ENCODE measurements at regions of chrX and their contacts with region 1.

Region 1: DNA sequence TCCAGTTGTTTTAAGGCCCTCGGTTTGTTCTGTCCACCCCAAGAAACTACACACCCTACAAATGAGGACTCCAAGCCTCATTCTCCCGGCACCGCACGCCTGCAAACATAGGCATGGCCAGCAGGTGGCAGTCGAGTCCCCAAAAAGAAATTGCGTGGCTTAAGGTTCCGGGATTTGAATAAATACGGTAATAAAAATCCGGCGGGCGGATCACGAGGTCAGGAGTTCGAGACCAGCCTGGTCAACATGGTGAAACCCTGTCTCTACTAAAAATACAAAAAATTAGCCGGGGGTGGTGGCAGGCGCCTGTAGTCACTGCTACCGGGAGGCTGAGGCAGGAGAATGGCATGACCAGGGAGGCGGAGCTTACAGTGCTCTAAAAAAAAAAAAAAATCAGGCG is 21.8 kb upstream of the CSF2RA start:
- DNase-seq: peak; percentile 59 to 70
- H3K4me3 ChIP-seq: no peak overlapping the region
- H3K4me3 Mint-ChIP-seq: no peak overlapping the region
- H3K27ac Mint-ChIP-seq: no peak overlapping the region
- H3K4me1 ChIP-seq: no peaks in the 10 kb centered on the region
- H3K4me1 Mint-ChIP-seq: peaks cover 6% of the 10 kb centered on the region
- H3K27me3 ChIP-seq: no peaks in the 10 kb centered on the region
- H3K27me3 Mint-ChIP-seq: no peaks in the 10 kb centered on the region
- CTCF ChIP-seq: peak; percentile 57 to 74

Region 2: DNA sequence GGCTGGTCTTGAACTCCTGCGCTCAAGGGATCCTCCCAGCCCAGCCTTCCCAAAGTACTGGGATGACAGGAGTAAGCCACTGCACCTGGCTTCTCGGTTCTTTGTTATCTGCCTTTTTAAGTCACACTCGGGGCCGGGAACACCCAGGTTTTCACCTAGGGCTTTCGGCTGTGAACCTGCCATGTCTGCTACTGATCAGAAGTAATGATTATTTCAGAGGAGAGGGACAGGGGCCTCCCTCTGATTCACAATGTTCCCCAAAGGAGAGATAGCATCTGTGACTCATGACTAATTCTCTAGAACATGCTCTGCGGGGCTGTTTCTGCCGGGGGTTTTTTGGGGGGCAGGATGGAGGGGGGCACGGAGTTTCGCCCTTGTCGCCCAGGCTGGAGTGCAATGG is 61.3 kb before region 1 on chrX:
- CTCF ChIA-PET with region 1: no interaction called
- POLR2A ChIA-PET with region 1: no interaction called
- intact Hi-C with region 1: no loop called
- DNase-seq: no peak
- H3K4me3 ChIP-seq: no peak overlapping the region
- H3K4me3 Mint-ChIP-seq: no peak overlapping the region
- H3K27ac Mint-ChIP-seq: no peak overlapping the region
- H3K4me1 ChIP-seq: no peaks in the 10 kb centered on the region
- H3K4me1 Mint-ChIP-seq: no peaks in the 10 kb centered on the region
- H3K27me3 ChIP-seq: no peaks in the 10 kb centered on the region
- H3K27me3 Mint-ChIP-seq: no peaks in the 10 kb centered on the region
- CTCF ChIP-seq: no peak

Region 3: DNA sequence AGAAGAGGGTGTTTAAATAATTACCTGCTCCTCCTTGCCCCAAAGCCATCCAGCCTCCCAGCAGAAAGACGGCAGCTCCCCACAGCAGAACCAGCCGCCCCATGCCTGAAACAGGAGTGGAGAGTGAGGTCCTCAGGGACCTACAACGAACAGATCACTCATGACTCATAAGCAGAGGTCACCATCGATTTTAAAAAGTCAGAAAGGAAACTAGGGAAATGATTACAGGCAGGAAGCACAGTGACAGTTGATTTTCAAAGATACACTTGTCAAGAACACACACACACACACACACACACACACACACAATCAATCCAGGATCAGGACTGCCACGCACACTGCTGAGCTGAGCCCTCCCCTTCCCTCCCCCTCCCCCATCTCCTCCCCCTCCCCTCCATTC is 34.3 kb before region 1 on chrX and contains the start of gene CRLF2:
- CTCF ChIA-PET with region 1: no interaction called
- POLR2A ChIA-PET with region 1: no interaction called
- intact Hi-C with region 1: no loop called
- DNase-seq: no peak
- H3K4me3 ChIP-seq: no peak within 1 kb of the TSS
- H3K4me3 Mint-ChIP-seq: no peak within 1 kb of the TSS
- H3K27ac Mint-ChIP-seq: no peak within 1 kb of the TSS
- H3K4me1 ChIP-seq: no peaks in the 10 kb centered on the region
- H3K4me1 Mint-ChIP-seq: no peaks in the 10 kb centered on the region
- H3K27me3 ChIP-seq: no peaks in the 10 kb centered on the region
- H3K27me3 Mint-ChIP-seq: no peaks in the 10 kb centered on the region
- CTCF ChIP-seq: no peak
- total RNA-seq, gene CRLF2: not detected in 2 replicates

Region 4: GRCh38 chrX:1274786-1275185 is 28.0 kb after region 1 on chrX:
- CTCF ChIA-PET with region 1: no interaction called
- POLR2A ChIA-PET with region 1: no interaction called
- intact Hi-C with region 1: loop called (anchors 2 kb)
- DNase-seq: no peak
- H3K4me3 ChIP-seq: no peak overlapping the region
- H3K4me3 Mint-ChIP-seq: no peak overlapping the region
- H3K27ac Mint-ChIP-seq: no peak overlapping the region
- H3K4me1 ChIP-seq: no peaks in the 10 kb centered on the region
- H3K4me1 Mint-ChIP-seq: no peaks in the 10 kb centered on the region
- H3K27me3 ChIP-seq: no peaks in the 10 kb centered on the region
- H3K27me3 Mint-ChIP-seq: no peaks in the 10 kb centered on the region
- CTCF ChIP-seq: no peak

Region 5: DNA sequence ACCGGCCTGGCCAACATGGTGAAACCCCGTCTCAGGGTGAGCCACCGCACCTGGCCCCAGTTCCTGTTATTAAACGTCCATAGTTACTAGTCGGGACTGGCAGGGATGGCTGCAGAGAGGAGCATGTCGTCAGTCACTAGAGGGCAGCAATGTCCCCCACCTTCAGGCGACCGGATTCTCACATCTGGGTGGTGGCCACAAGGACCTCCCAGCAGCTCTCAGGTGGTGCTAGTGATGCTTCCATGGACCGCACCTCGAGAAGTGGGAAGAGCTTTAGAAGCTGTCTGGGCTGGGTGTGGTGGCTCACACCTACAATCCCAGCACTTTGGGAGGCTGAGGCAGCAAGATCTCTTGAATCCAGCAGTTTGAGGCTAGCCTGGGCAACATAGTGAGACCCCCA is 76.5 kb after region 1 on chrX:
- CTCF ChIA-PET with region 1: no interaction called
- POLR2A ChIA-PET with region 1: no interaction called
- intact Hi-C with region 1: loop called (anchors 10 kb)
- DNase-seq: peak; percentile 64 to 70
- H3K4me3 ChIP-seq: no peak overlapping the region
- H3K4me3 Mint-ChIP-seq: no peak overlapping the region
- H3K27ac Mint-ChIP-seq: no peak overlapping the region
- H3K4me1 ChIP-seq: no peaks in the 10 kb centered on the region
- H3K4me1 Mint-ChIP-seq: no peaks in the 10 kb centered on the region
- H3K27me3 ChIP-seq: no peaks in the 10 kb centered on the region
- H3K27me3 Mint-ChIP-seq: peaks cover 6% of the 10 kb centered on the region
- CTCF ChIP-seq: peak; percentile 34 to 38

Region 6: DNA sequence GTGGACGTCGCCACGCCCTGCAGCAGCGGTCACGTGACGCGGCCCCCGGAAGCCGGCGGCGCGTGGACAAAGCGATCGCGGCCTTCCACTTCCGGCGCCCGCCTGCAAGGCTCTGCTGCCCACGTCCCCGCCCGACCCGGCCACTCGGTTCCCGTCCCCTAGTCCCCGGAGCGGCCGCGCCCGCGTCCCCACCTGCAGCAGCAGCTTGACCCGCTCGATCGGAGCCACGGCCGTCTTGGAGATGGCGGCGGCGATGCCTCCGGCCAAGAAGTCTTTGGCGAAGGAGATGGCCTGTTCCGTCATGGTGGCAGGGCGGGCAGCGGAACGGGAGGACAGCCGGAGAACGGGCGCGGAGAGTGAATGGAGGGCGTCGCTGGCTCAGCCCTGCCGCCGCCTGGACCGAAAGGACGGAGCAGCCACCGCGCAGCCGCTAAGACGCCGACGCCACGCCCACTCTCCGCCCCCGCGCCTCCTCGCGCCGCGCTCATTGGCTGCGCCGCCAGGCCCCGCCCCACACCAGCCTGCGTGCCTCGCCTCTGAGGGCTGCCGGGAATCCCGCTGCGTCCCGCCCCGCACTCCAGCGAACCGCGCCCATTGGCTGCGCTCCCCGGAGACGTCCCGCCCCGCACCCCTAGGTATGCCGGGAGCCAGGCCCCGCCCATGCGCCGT is 145.0 kb after region 1 on chrX and contains the start of gene SLC25A6:
- CTCF ChIA-PET with region 1: no interaction called
- POLR2A ChIA-PET with region 1: no interaction called
- intact Hi-C with region 1: loop called (anchors 1 kb)
- DNase-seq: peak; percentile 98 to 99
- H3K4me3 ChIP-seq: peak within 1 kb of the TSS; percentile 100
- H3K4me3 Mint-ChIP-seq: peak within 1 kb of the TSS; percentile 93
- H3K27ac Mint-ChIP-seq: peak within 1 kb of the TSS; percentile 99
- H3K4me1 ChIP-seq: 0 out of 2 replicates have a peak, but pooled peaks cover 5% of the 10 kb centered on the region
- H3K4me1 Mint-ChIP-seq: peaks cover 25% of the 10 kb centered on the region
- H3K27me3 ChIP-seq: no peaks in the 10 kb centered on the region
- H3K27me3 Mint-ChIP-seq: no peaks in the 10 kb centered on the region
- CTCF ChIP-seq: no peak
- total RNA-seq, gene SLC25A6: 450 and 455 TPM in 2 replicates

Region 7: GRCh38 chrX:2391869-2392606 is 1145.2 kb after region 1 on chrX:
- CTCF ChIA-PET with region 1: no interaction called
- POLR2A ChIA-PET with region 1: no interaction called
- intact Hi-C with region 1: no loop called
- DNase-seq: peak; percentile 79 to 87
- H3K4me3 ChIP-seq: no peak overlapping the region
- H3K4me3 Mint-ChIP-seq: no peak overlapping the region
- H3K27ac Mint-ChIP-seq: no peak overlapping the region
- H3K4me1 ChIP-seq: 0 out of 2 replicates have a peak, but pooled peaks cover 3% of the 10 kb centered on the region
- H3K4me1 Mint-ChIP-seq: peaks cover 7% of the 10 kb centered on the region
- H3K27me3 ChIP-seq: no peaks in the 10 kb centered on the region
- H3K27me3 Mint-ChIP-seq: no peaks in the 10 kb centered on the region
- CTCF ChIP-seq: no peak

Measured in Caco-2 (cell line).